ENCODE measurements at regions of chr19 and their contacts with region 1.

Region 1: GRCh38 chr19:16382775-16383543 is 58.3 kb downstream of the KLF2 start:
- H3K4me3 Mint-ChIP-seq: no peak overlapping the region
- H3K27ac Mint-ChIP-seq: peak overlapping the region; percentile 58
- H3K4me1 Mint-ChIP-seq: peaks cover 17% of the 10 kb centered on the region
- H3K27me3 Mint-ChIP-seq: no peaks in the 10 kb centered on the region

Region 2: DNA sequence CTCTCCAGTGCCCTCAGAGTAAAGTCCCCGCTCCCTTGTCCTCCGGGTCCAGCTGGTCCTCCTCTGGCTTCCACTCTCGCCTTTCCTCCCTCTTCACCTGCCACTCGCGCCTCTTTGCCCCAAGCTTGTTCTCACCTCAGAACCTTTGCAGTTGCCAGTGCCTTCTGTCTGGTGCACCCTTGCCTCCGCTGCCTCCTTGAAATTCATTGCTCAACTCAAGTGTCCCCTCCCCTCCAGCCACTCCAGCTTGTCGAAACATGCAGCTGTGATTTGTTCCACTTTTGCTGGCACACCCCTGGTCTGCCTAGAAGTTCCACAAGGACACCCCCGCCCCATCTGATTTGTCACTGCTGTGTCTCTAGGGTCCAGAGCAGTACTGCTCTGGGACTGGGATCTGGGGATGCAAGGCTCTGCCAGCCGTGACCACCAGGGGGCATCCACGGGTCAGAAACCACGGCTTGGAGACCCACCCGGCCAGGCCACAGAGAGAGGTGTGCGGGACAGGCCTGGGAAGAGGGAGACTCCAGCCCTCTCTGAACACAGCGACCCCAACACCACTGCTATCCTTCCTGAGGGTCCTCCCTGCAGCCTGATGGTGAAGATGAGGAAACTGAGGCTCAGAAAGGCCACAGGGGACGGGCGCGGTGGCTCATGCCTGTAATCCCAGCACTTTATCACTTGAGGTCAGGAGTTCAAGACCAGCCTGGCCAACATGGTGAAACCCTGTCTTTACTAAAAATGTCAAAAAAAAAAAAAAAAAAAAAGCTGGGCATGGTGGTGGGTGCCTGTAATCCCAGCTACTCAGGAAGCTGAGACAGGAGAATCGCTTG is 135.4 kb before region 1 on chr19:
- intact Hi-C with region 1: loop called (anchors 1 kb)
- H3K4me3 Mint-ChIP-seq: no peak overlapping the region
- H3K27ac Mint-ChIP-seq: peak overlapping the region; percentile 57
- H3K4me1 Mint-ChIP-seq: peaks cover 14% of the 10 kb centered on the region
- H3K27me3 Mint-ChIP-seq: peaks cover 6% of the 10 kb centered on the region

Region 3: DNA sequence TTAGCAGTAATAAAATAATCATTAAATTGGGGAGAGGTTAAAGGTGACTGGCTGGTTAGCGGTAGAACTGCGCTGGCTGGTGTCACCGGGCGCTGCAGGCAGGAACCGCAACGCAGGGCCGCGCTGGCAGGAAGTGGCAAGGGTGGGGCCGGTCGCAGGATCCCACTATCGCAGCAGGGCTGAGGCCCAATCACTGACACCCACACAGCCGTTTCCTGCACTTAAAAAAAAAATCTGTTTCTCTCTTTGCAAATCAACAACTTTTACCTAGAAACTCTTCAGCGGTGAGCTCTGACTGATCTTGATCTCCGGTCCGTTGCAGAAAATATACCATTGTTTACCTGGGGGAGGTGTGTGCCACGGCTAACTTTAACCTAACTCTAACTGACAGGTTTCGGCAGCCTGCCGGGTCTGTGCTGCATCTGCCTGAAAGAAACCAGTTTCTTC is 11.4 kb before region 1 on chr19:
- intact Hi-C with region 1: no loop called
- H3K4me3 Mint-ChIP-seq: peak overlapping the region; percentile 47
- H3K27ac Mint-ChIP-seq: peak overlapping the region; percentile 82
- H3K4me1 Mint-ChIP-seq: peaks cover 58% of the 10 kb centered on the region
- H3K27me3 Mint-ChIP-seq: peaks cover 8% of the 10 kb centered on the region

Measured in dendritic cell treated with granulocyte-macrophage colony-stimulating factor and Interleukin-4, amounts not matched to agents 40 ng/mL and 50 ng/mL, for 4 days (primary cell).